ENCODE measurements at regions of chr4 and their contacts with region 1.

Region 1: DNA sequence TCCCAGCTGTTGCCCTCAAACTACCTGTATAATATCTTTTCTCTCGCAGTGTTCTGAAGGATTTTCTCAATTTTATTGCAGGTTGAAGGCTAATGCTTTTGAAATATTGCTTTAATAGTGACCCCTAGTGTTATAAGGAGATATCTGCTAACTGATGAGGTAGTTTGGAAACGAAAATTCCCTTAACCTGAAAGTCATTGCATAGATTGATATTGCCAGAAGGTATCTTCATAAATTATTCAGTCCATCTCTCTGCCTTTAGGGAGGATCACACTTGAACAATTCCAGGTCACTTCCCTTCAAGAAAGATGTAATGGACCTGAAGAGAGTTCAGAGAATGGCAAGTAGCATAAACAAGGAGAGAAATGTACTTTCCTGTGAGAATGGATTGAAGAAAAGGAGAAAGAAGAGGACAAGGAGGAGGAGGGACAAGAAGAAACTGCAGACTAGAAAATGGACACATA is 44.1 kb downstream of the TIGD4 start:
- DNase-seq: peak; percentile 58
- H3K4me3 ChIP-seq: no peak overlapping the region
- H3K27ac ChIP-seq: no peak overlapping the region
- H3K4me1 ChIP-seq: no peaks in the 10 kb centered on the region
- H3K27me3 ChIP-seq: no peaks in the 10 kb centered on the region
- CTCF ChIP-seq: peak; percentile 70

Region 2: GRCh38 chr4:152408514-152409327 is 326.7 kb before region 1 on chr4:
- CTCF ChIA-PET with region 1: no interaction called
- POLR2A ChIA-PET with region 1: no interaction called
- intact Hi-C with region 1: loop called (anchors 5 kb)
- DNase-seq: peak; percentile 71
- H3K4me3 ChIP-seq: no peak overlapping the region
- H3K27ac ChIP-seq: no peak overlapping the region
- H3K4me1 ChIP-seq: peaks cover 10% of the 10 kb centered on the region
- H3K27me3 ChIP-seq: no peaks in the 10 kb centered on the region
- CTCF ChIP-seq: peak; percentile 78

Region 3: GRCh38 chr4:152454398-152455011 is 280.9 kb before region 1 on chr4:
- CTCF ChIA-PET with region 1: no interaction called
- POLR2A ChIA-PET with region 1: no interaction called
- intact Hi-C with region 1: loop called (anchors 5 kb)
- DNase-seq: peak; percentile 48
- H3K4me3 ChIP-seq: no peak overlapping the region
- H3K27ac ChIP-seq: no peak overlapping the region
- H3K4me1 ChIP-seq: peaks cover 4% of the 10 kb centered on the region
- H3K27me3 ChIP-seq: no peaks in the 10 kb centered on the region
- CTCF ChIP-seq: peak; percentile 77

Region 4: DNA sequence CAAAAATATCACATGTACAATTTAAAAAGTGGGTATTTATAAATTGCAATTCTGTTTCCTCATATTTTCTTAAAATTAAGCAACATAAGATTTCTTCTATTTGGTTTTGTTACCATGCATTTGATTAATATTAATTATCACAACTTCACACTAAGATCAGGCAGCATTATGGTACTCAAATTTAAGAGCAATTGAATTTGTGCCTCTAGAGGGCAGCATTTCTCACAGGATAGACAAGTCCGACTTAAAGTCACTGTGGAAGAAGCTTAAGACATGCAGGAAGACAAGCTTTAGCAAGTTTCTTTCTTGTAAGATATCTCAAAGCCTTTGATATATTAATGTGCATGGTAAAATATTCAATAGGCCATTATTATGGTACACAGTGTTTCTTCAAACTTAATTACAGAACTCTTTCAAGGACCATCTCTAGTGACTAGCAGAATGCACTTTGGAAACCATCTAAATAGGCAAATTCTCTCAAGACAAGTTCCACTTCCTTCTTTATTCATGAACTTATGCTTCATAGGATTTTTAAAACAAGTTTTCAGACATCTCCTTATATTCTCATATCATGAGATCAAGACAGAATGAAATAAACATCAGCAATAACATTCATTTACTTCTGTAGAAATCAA is 234.5 kb before region 1 on chr4:
- CTCF ChIA-PET with region 1: no interaction called
- POLR2A ChIA-PET with region 1: no interaction called
- intact Hi-C with region 1: loop called (anchors 2 kb)
- DNase-seq: peak; percentile 89
- H3K4me3 ChIP-seq: no peak overlapping the region
- H3K27ac ChIP-seq: no peak overlapping the region
- H3K4me1 ChIP-seq: peaks cover 10% of the 10 kb centered on the region
- H3K27me3 ChIP-seq: no peaks in the 10 kb centered on the region
- CTCF ChIP-seq: peak; percentile 88

Measured in A673 (cell line).